ENCODE measurements at regions of chr17 and their contacts with region 1.

Region 1: GRCh38 chr17:13129356-13129755 is 111.5 kb upstream of the ELAC2 start:
- DNase-seq: no peak
- ATAC-seq: no peak
- H3K4me3 ChIP-seq: no peak overlapping the region
- H3K27ac ChIP-seq: no peak overlapping the region
- H3K4me1 ChIP-seq: no peaks in the 10 kb centered on the region
- H3K27me3 ChIP-seq: peaks cover 3% of the 10 kb centered on the region; the same call in 1 of the 2 replicates
- CTCF ChIP-seq: no peak
- POLR2A ChIP-seq: no peak
- RAD21 ChIP-seq: no peak

Region 2: DNA sequence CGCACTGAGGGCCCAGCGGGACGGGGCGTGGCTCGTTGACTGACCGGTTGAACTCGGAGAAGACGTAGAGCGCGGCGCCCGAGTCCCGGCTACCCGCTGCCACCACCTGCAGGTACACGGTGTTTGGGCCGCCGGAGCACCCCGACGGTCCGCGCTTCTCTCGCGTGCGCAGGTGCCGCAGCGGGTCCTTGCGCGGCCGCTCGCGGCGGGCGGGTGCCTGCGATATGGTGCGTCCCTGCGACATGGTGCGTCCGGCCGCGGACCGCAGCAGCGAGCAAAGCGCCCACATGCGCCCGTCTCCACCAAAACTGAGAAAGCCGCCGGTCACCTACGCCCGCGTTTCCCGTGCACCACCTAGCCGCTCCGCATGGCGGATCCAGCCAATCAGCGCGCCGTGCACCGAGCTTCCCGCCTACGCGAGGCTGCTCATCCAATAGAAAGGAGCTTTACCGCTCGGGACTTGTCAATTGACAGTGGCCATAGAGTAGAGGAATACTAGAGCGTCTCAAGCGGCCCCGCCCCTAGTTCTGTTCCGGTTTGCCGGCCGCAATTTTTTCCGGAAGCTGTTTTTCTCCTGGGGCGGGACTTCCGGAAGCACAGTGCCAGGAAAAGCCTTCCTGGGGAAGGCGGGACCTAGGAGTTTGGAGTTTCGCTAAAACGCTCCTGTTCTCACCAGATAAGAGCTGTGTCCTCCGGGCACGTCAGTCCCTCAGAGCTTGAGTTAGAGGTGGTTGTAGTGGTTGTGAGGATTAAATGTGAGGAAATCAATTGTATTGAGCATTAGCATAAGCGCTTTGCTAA is 111.5 kb before region 1 on chr17 and contains the start of gene ELAC2:
- CTCF ChIA-PET with region 1: no interaction called
- POLR2A ChIA-PET with region 1: no interaction called
- RAD21 ChIA-PET with region 1: no interaction called
- intact Hi-C with region 1: no loop called
- DNase-seq: peak; percentile 97
- ATAC-seq: peak; percentile 97
- H3K4me3 ChIP-seq: peak within 1 kb of the TSS; percentile 96 to 97
- H3K27ac ChIP-seq: peak within 1 kb of the TSS; percentile 99
- H3K4me1 ChIP-seq: peaks cover 4 to 10% of the 10 kb centered on the region in 2 experiments; a peak in 3 of 4 replicates
- H3K27me3 ChIP-seq: no peaks in the 10 kb centered on the region
- CTCF ChIP-seq: no peak
- POLR2A ChIP-seq: peak; percentile 92
- RAD21 ChIP-seq: no peak
- total RNA-seq, gene ELAC2: 84.5 TPM

Region 3: DNA sequence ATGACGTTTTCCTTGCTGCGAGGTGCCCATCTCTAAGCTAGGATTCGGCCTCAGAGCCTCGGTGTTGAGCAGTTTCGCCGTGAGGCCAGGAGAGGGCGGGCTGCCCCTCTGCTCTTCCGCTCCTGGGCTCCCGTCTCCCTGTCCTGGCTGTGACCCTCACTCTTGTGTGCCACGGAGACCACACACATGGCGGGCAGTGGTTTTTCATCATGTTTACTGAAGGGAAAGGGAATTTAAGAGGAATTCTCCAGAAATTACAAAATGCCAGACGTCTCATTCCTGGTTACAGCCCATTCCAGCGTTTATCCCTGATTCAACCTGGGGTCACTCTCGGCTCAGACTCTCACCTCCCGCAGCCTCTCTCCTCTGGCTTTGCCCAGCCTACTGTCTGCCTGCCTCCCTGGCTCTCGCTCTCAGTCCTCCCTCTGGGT is 14.7 kb before region 1 on chr17:
- CTCF ChIA-PET with region 1: interaction called, 11 read pairs
- POLR2A ChIA-PET with region 1: no interaction called
- RAD21 ChIA-PET with region 1: no interaction called
- intact Hi-C with region 1: no loop called
- DNase-seq: peak; percentile 13
- ATAC-seq: peak; percentile 99
- H3K4me3 ChIP-seq: no peak overlapping the region
- H3K27ac ChIP-seq: no peak overlapping the region
- H3K4me1 ChIP-seq: no peaks in the 10 kb centered on the region
- H3K27me3 ChIP-seq: peaks cover 20% of the 10 kb centered on the region; the same call in 1 of the 2 replicates
- CTCF ChIP-seq: peak; percentile 33 to 87 (median 87); a peak in 5 of 6 replicates
- POLR2A ChIP-seq: no peak
- RAD21 ChIP-seq: peak; percentile 58